Naive thymus-derived CD4-positive, alpha-beta T cell (primary cell): ENCODE measurements at regions of chr7 and their contacts with region 1.

Region 1: DNA sequence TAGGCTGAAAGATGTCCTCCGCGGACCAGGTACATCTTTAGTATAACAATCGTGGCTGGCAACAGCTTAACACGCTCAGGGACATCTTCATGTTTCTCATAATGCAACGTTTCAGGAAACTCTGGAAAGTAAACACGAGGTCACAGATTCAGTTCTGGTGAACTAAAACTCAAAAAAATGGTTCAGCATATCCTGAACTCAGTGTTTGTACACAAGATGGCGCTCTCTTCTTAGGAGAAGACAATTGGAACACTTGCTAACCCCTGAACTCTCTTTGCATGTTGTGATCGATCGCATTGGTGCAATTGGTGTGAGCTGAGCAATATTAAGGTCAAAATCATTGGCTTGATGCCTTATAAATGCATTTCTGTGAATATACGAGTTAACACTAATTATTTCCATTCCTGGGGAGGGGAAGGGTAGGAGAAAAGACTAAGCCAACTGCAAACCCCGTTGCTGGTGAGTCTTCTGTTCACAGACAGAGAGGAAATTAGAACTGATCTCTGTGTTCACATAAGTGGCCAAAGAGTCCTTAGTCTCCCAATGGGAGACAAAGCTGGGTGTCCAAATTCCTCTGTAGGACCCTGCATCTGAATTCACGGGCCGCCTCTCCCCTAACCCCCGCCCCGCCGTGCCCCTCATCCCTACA is 52.6 kb upstream of the FAM180A start:
- DNase-seq: peak in 7 of 9 donors; percentile 16 to 59 (median 50)
- ATAC-seq: peak; percentile 78
- H3K4me3 ChIP-seq: no peak overlapping the region
- H3K4me3 Mint-ChIP-seq: peak overlapping the region in 1 of 10 donors; percentile 6
- H3K27ac ChIP-seq: no peak overlapping the region
- H3K27ac Mint-ChIP-seq: no peak overlapping the region
- H3K4me1 ChIP-seq: peaks cover 0 to 8% of the 10 kb centered on the region in 2 donors
- H3K4me1 Mint-ChIP-seq: peaks cover 0 to 7% (median 5%) of the 10 kb centered on the region in 7 donors
- H3K27me3 ChIP-seq: no peaks in the 10 kb centered on the region
- H3K27me3 Mint-ChIP-seq: peaks cover 10 to 26% (median 14%) of the 10 kb centered on the region in 5 donors

Region 2: DNA sequence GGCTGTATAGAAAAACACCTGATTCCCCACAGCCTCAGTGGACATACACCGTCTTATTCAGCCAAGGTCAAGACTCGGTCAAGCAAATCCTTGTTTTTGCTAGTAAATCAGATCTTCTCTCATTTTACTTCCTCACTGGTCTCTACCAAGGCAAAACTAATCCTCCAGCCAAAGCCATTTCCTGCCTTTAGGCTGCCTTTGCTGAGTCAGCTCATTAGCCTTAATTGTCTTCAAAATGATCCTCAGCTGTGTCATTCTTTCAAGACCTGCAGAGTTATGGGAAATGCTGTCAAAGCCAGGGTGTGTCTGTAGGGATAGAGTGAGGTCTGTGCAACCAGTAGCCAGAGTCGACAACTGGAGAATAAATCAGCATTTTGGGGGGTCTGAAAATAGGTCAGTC is 54.7 kb after region 1 on chr7:
- CTCF ChIA-PET with region 1: no interaction called
- POLR2A ChIA-PET with region 1: no interaction called
- intact Hi-C with region 1: no loop called
- DNase-seq: no peak
- ATAC-seq: no peak
- H3K4me3 ChIP-seq: no peak overlapping the region
- H3K4me3 Mint-ChIP-seq: no peak overlapping the region
- H3K27ac ChIP-seq: no peak overlapping the region
- H3K27ac Mint-ChIP-seq: peak overlapping the region in 1 of 9 donors; percentile 5
- H3K4me1 ChIP-seq: no peaks in the 10 kb centered on the region
- H3K4me1 Mint-ChIP-seq: peaks cover 0 to 3% (median 0%) of the 10 kb centered on the region in 7 donors
- H3K27me3 ChIP-seq: no peaks in the 10 kb centered on the region
- H3K27me3 Mint-ChIP-seq: peaks cover 0 to 28% (median 13%) of the 10 kb centered on the region in 5 donors

Region 3: DNA sequence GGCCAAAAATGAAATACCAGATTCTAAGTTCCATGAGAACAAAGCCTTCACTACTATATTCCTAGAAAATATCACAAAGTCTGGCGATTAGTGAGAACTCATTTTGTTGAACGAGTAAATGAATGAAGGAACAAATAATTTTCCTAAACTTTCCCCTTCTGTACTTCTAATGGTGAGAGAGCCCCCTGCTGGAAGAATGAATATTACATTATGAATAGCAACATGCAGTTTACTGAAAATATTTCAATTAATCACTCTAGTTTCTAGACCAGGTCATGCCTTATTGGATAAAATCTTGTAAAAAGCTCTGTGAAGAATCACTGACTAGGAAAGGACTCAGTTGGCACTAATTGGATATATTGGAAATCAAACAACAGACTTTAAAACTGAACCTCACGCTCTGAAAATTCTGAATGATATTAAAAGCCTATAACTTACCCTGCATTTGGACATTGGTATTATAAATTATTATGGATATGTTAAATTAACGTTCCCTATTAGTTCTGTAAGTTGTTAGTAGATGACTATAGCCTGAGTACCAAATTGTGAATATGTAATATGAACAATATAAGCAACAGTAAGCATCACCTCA is 208.4 kb after region 1 on chr7:
- CTCF ChIA-PET with region 1: interaction called, 8 read pairs
- POLR2A ChIA-PET with region 1: no interaction called
- intact Hi-C with region 1: loop called in 1 of 2 experiments (anchors 1 kb)
- DNase-seq: peak in 7 of 9 donors; percentile 13 to 51 (median 40)
- ATAC-seq: peak; percentile 45
- H3K4me3 ChIP-seq: no peak overlapping the region
- H3K4me3 Mint-ChIP-seq: no peak overlapping the region
- H3K27ac ChIP-seq: no peak overlapping the region
- H3K27ac Mint-ChIP-seq: no peak overlapping the region
- H3K4me1 ChIP-seq: no peaks in the 10 kb centered on the region
- H3K4me1 Mint-ChIP-seq: peaks cover 0 to 10% (median 6%) of the 10 kb centered on the region in 7 donors
- H3K27me3 ChIP-seq: no peaks in the 10 kb centered on the region
- H3K27me3 Mint-ChIP-seq: peaks cover 3 to 22% (median 9%) of the 10 kb centered on the region in 5 donors

Region 4: DNA sequence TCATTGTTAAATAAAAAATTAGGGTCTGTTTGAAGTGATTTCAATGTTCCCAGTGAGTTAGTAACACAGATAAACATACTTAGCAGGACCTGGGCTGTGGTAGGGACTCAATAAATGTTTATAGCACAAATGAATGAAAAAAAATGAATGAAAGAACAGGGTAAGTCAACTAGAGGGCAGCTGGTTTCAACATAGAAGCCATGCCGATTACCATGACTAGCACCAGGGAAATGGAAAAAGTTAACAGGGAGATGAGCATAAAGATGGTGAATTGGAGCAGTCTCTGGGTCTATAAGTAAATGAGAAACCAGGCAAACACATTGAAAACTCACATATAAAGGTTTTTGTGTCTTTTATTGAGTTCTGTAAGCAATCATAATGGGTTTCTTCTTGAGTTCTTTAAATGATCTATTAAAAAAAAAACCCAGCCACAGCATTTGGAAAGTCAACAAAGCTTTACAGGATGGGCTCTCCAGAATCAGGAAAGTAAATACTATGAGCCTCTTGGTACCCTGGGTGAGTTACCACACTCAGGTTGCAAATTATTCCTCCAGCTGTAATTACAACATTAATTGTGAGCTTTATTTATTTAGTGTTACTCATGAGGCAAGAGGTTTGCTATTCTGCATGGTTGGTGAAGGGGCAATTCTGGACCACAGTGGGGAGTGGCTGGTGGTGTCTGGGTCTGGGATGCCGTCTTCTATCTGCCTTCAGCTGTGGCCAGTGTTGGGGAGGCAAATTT is 222.1 kb after region 1 on chr7:
- CTCF ChIA-PET with region 1: no interaction called
- POLR2A ChIA-PET with region 1: no interaction called
- intact Hi-C with region 1: no loop called
- DNase-seq: no peak
- ATAC-seq: no peak
- H3K4me3 ChIP-seq: no peak overlapping the region
- H3K4me3 Mint-ChIP-seq: no peak overlapping the region
- H3K27ac ChIP-seq: no peak overlapping the region
- H3K27ac Mint-ChIP-seq: no peak overlapping the region
- H3K4me1 ChIP-seq: no peaks in the 10 kb centered on the region
- H3K4me1 Mint-ChIP-seq: peaks cover 0 to 2% (median 0%) of the 10 kb centered on the region in 7 donors
- H3K27me3 ChIP-seq: no peaks in the 10 kb centered on the region
- H3K27me3 Mint-ChIP-seq: peaks cover 0 to 4% (median 0%) of the 10 kb centered on the region in 5 donors

Region 5: GRCh38 chr7:136405931-136406777 is 605.0 kb after region 1 on chr7:
- CTCF ChIA-PET with region 1: no interaction called
- POLR2A ChIA-PET with region 1: no interaction called
- intact Hi-C with region 1: loop called in 1 of 2 experiments (anchors 5 kb)
- DNase-seq: peak in 5 of 9 donors; percentile 7 to 23 (median 14)
- ATAC-seq: peak; percentile 69
- H3K4me3 ChIP-seq: no peak overlapping the region
- H3K4me3 Mint-ChIP-seq: no peak overlapping the region
- H3K27ac ChIP-seq: no peak overlapping the region
- H3K27ac Mint-ChIP-seq: no peak overlapping the region
- H3K4me1 ChIP-seq: no peaks in the 10 kb centered on the region
- H3K4me1 Mint-ChIP-seq: peaks cover 0 to 11% (median 7%) of the 10 kb centered on the region in 7 donors
- H3K27me3 ChIP-seq: no peaks in the 10 kb centered on the region
- H3K27me3 Mint-ChIP-seq: no peaks in the 10 kb centered on the region